ENCODE measurements at regions of chr11 and their contacts with region 1.

Region 1: DNA sequence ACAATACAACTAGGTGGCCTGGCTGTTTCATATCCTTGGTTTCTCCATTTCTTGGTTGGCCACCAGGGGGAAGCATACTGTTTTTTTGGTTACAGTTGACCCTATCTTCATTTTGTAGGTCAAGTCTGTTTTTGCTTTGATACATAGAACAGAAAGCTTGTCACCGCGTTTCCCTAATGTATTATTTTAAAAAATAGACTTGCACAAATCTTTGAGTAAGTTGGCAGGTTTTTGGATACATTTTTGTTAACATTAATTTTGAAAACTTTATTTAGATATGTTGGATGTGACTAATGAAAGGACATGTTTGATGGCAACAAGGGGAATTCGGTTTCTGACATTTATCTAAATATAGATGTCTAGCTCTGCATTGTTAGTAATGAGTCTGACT is 3.0 kb downstream of the NCR3LG1 start:
- DNase-seq: peak; percentile 72
- H3K4me3 ChIP-seq: no peak overlapping the region
- H3K27ac ChIP-seq: no peak overlapping the region
- H3K4me1 ChIP-seq: peaks cover 0 to 31% (median 23%) of the 10 kb centered on the region in 4 donors
- H3K27me3 ChIP-seq: no peaks in the 10 kb centered on the region
- CTCF ChIP-seq: peak in 3 of 4 experiments; percentile 38 to 54 (median 42)
- EP300 ChIP-seq: no peak
- POLR2A ChIP-seq: no peak

Region 2: GRCh38 chr11:17276236-17277023 is 78.2 kb before region 1 on chr11 and contains the start of gene NUCB2:
- intact Hi-C with region 1: loop called (anchors 2 kb)
- DNase-seq: peak; percentile 98
- H3K4me3 ChIP-seq: peak within 1 kb of the TSS; percentile 71 to 99 (median 88)
- H3K27ac ChIP-seq: peak within 1 kb of the TSS; percentile 89 to 96 (median 93)
- H3K4me1 ChIP-seq: peaks cover 0 to 8% (median 4%) of the 10 kb centered on the region in 4 donors
- H3K27me3 ChIP-seq: no peaks in the 10 kb centered on the region
- CTCF ChIP-seq: no peak
- EP300 ChIP-seq: no peak
- POLR2A ChIP-seq: peak; percentile 30 to 35
- total RNA-seq, gene NUCB2: 38.3 to 45.1 (median 39.4) TPM

Region 3: DNA sequence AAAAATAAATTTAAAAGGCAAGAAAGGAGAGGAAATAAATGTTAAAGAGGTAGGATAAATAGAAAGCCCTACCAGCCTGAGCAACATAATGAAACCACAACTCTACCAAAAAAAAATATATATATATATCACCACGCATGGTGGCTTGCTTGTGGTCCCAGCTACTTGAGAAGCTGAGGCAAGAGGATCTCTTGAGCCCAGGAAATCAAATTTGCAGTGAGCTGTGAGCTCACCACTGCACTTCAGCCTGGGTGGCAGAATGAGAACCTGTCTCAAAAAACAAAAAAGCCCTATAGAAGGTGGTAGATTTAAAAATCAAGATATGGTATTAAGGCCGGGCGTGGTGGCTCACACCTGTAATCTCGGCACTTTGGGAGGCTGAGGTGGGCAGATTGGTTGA is 67.5 kb before region 1 on chr11:
- intact Hi-C with region 1: no loop called
- DNase-seq: no peak
- H3K4me3 ChIP-seq: no peak overlapping the region
- H3K27ac ChIP-seq: no peak overlapping the region
- H3K4me1 ChIP-seq: no peaks in the 10 kb centered on the region
- H3K27me3 ChIP-seq: no peaks in the 10 kb centered on the region
- CTCF ChIP-seq: no peak
- EP300 ChIP-seq: no peak
- POLR2A ChIP-seq: no peak

Region 4: DNA sequence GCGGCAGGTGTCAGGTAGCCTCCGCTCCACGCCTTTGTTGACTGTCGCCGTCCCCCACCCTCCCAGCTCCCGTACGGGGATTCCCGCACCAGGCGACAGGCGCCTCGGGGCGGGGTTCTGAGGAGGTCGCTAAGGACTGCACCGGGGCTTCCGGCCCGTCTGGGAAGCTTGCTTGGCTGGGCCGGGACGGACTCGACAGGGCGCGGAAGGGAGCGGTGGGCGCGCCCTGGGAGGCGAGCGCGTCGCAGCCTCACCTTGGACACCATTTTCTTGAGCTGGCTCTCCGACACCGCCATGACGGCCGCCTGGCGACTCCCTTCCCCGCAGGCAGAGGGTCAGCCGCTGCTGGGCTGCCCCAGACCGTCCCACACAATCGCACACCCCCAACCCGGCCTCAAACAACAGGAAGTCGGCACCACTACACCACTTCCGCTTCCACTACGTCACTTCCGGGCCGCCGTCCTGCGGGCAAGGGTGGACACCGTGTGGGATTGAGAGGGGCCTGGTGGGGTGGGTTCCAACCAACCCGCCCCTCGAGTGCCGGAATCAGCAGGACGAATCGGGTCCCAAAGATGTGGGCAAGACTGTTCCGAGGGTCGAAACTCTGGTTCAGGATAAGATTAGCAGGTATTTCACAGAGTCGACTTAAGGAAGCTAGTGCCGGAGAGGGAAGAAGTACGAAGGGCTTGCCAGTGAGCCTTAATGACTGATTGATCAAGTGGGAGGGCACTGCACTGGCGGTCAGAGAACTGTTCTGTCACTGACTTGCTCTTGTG is 1172.1 kb after region 1 on chr11 and contains the start of gene TSG101:
- intact Hi-C with region 1: loop called (anchors 5 kb)
- DNase-seq: peak; percentile 95
- H3K4me3 ChIP-seq: peak within 1 kb of the TSS; percentile 82 to 95 (median 90)
- H3K27ac ChIP-seq: peak within 1 kb of the TSS; percentile 88 to 95 (median 92)
- H3K4me1 ChIP-seq: peaks cover 0 to 27% (median 22%) of the 10 kb centered on the region in 4 donors
- H3K27me3 ChIP-seq: no peaks in the 10 kb centered on the region
- CTCF ChIP-seq: no peak
- EP300 ChIP-seq: peak in 1 of 4 donors; percentile 14
- POLR2A ChIP-seq: peak; percentile 91 to 93
- total RNA-seq, gene TSG101: 70.3 to 100 (median 89.8) TPM